ENCODE measurements at regions of chr2 and their contacts with region 1.

Region 1: GRCh38 chr2:70789304-70790135 is 923 bp downstream of the FIGLA start:
- DNase-seq: peak; percentile 36 to 79 (median 56)
- ATAC-seq: peak; percentile 73
- H3K4me3 ChIP-seq: peak overlapping the region; percentile 38
- H3K4me3 Mint-ChIP-seq: peak overlapping the region; percentile 81
- H3K27ac ChIP-seq: no peak overlapping the region
- H3K27ac Mint-ChIP-seq: no peak overlapping the region
- H3K4me1 ChIP-seq: peaks cover 11% of the 10 kb centered on the region
- H3K4me1 Mint-ChIP-seq: peaks cover 13% of the 10 kb centered on the region
- H3K27me3 ChIP-seq: peaks cover 31 to 53% of the 10 kb centered on the region in 2 experiments
- H3K27me3 Mint-ChIP-seq: peaks cover 71% of the 10 kb centered on the region
- CTCF ChIP-seq: peak; percentile 66

Region 2: GRCh38 chr2:70656421-70657010 is 133.0 kb before region 1 on chr2:
- CTCF ChIA-PET with region 1: interaction called, 5 read pairs
- POLR2A ChIA-PET with region 1: interaction called, 4 read pairs
- intact Hi-C with region 1: loop called (anchors 1 kb)
- DNase-seq: peak in 11 of 14 experiments; percentile 18 to 71 (median 44)
- ATAC-seq: peak; percentile 87
- H3K4me3 ChIP-seq: no peak overlapping the region
- H3K4me3 Mint-ChIP-seq: peak overlapping the region; percentile 9
- H3K27ac ChIP-seq: peak overlapping the region in 1 of 2 donors; percentile 34
- H3K27ac Mint-ChIP-seq: peak overlapping the region; percentile 82
- H3K4me1 ChIP-seq: peaks cover 24% of the 10 kb centered on the region
- H3K4me1 Mint-ChIP-seq: peaks cover 36% of the 10 kb centered on the region
- H3K27me3 ChIP-seq: peaks cover 4% of the 10 kb centered on the region in 2 experiments
- H3K27me3 Mint-ChIP-seq: peaks cover 8% of the 10 kb centered on the region
- CTCF ChIP-seq: no peak

Region 3: DNA sequence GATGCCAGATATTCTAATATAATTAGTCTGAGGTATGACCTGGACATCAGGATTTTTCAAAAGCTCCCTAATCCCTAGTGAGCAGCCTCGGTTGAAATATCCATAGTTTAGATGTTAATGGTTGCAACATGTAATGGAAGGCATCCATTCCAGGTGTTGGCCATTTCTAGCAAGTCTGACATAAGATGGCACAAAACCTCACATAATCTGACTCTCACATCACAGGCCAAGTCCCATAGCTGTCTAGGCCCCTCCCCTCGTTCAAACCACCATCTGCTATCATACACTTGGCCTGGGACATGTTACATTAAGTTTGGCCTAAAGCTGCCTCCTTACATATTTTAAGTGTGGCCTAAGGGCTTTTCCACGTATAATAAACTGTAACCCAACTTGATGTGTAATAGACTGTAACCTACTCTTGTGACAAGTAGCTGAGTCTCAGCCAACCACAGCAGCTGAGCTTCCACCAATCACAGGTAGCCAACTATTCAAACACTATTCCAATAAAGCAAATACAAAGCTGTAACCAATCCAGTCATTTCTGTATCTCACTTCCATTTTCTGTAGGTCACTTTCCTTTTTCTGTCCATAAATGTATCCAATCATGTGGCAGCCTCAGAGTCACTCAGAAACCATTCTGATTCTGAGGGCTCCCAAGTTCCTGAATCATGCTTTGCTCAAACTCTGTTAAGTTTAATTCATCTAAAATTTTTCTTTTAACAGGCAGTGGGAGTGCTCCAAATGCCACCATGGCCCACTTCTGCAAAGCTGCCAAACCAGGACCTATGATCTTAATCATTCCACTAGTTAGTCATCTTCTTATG is 80.9 kb before region 1 on chr2:
- CTCF ChIA-PET with region 1: no interaction called
- POLR2A ChIA-PET with region 1: no interaction called
- intact Hi-C with region 1: no loop called
- DNase-seq: no peak
- ATAC-seq: no peak
- H3K4me3 ChIP-seq: no peak overlapping the region
- H3K4me3 Mint-ChIP-seq: no peak overlapping the region
- H3K27ac ChIP-seq: no peak overlapping the region
- H3K27ac Mint-ChIP-seq: no peak overlapping the region
- H3K4me1 ChIP-seq: no peaks in the 10 kb centered on the region
- H3K4me1 Mint-ChIP-seq: no peaks in the 10 kb centered on the region
- H3K27me3 ChIP-seq: no peaks in the 10 kb centered on the region
- H3K27me3 Mint-ChIP-seq: no peaks in the 10 kb centered on the region
- CTCF ChIP-seq: no peak

Region 4: DNA sequence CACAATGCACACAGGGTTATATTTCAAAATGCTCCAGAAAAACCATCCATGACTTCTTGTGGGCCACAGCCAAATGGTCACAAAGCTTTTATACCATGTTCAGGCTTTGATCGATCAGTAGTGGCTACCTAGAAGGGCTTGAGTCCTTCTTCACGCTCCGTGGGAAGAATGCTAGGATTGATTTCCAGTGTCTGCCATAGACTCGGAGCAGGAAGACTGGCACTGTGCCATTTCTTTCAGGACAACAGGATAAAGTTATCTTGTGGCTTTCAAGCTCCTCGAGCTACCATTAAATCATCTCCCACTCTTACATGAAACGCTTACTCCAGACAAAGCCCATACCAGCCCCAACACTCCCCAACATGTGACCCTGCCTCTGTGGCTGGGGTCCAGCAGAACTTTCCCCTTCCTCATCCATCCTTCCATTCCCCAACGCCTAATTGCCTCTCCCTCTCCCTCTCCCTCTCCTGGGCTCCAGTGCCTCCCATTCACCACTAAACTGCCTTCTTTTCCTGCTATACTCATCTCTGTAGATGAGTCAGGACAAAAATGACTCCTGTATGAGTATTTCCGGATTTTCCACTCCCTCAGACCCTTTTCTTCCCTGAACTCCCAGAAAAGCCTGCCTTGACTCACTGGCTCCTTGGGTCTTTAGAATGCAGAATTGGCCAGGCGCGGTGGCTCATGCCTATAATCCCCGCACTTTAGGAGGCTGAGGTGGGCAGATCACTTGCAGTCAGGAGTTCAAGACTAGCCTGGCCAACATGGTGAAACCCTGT is 62.4 kb before region 1 on chr2:
- CTCF ChIA-PET with region 1: no interaction called
- POLR2A ChIA-PET with region 1: no interaction called
- intact Hi-C with region 1: no loop called
- DNase-seq: no peak
- ATAC-seq: no peak
- H3K4me3 ChIP-seq: no peak overlapping the region
- H3K4me3 Mint-ChIP-seq: no peak overlapping the region
- H3K27ac ChIP-seq: no peak overlapping the region
- H3K27ac Mint-ChIP-seq: no peak overlapping the region
- H3K4me1 ChIP-seq: no peaks in the 10 kb centered on the region
- H3K4me1 Mint-ChIP-seq: no peaks in the 10 kb centered on the region
- H3K27me3 ChIP-seq: no peaks in the 10 kb centered on the region
- H3K27me3 Mint-ChIP-seq: no peaks in the 10 kb centered on the region
- CTCF ChIP-seq: no peak

Region 5: GRCh38 chr2:70861777-70862625 is 72.5 kb after region 1 on chr2:
- CTCF ChIA-PET with region 1: no interaction called
- POLR2A ChIA-PET with region 1: no interaction called
- intact Hi-C with region 1: loop called in 1 of 2 experiments (anchors 5 kb)
- DNase-seq: peak; percentile 51 to 84 (median 60)
- ATAC-seq: peak; percentile 74
- H3K4me3 ChIP-seq: no peak overlapping the region
- H3K4me3 Mint-ChIP-seq: no peak overlapping the region
- H3K27ac ChIP-seq: no peak overlapping the region
- H3K27ac Mint-ChIP-seq: no peak overlapping the region
- H3K4me1 ChIP-seq: peaks cover 6% of the 10 kb centered on the region
- H3K4me1 Mint-ChIP-seq: peaks cover 5% of the 10 kb centered on the region
- H3K27me3 ChIP-seq: peaks cover 14 to 20% of the 10 kb centered on the region in 2 experiments
- H3K27me3 Mint-ChIP-seq: peaks cover 50% of the 10 kb centered on the region
- CTCF ChIP-seq: peak; percentile 89

Region 6: DNA sequence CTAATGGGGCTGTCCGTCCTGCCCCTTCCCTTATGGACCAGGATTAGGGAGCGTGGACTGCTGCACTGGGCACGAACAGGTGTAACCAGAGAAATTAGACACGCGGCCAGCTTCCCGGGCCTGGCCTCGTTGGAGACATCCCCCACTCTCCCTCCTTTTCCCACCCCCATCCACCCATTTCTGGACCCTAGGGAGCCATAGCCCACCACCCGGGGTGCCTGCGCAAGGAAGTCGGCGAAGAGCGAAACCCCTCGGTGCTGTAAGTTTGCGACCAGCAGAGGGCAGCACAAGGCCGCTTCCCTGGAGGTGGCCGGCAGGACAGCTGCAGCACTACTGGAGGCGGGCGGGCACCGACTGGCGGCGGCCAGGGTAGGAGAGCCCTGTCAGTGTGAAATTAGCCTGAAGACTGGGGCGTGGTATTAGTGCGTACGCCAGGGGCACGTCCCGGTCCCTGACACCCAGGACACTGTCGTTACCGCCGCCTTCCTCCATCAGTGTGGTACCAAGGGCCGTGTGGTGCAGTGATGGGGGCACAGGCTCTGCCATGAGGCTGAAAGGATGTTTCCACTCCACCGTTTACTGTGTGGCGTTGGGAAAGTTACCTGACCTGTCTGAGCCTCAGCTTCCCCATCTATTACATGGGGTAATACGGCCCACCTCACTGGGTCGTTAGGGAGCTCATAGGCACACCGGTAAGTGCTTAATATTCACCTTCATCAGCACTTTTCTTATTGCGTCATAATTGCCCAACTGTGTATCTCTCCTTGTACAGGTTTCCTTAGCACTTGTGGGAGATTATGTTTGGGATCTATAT is 82.1 kb after region 1 on chr2:
- CTCF ChIA-PET with region 1: interaction called, 5 read pairs
- POLR2A ChIA-PET with region 1: interaction called, 3 read pairs
- intact Hi-C with region 1: loop called in 1 of 2 experiments (anchors 5 kb)
- DNase-seq: peak; percentile 59 to 88 (median 74)
- ATAC-seq: peak; percentile 92
- H3K4me3 ChIP-seq: no peak overlapping the region
- H3K4me3 Mint-ChIP-seq: no peak overlapping the region
- H3K27ac ChIP-seq: no peak overlapping the region
- H3K27ac Mint-ChIP-seq: no peak overlapping the region
- H3K4me1 ChIP-seq: peaks cover 11% of the 10 kb centered on the region
- H3K4me1 Mint-ChIP-seq: peaks cover 5% of the 10 kb centered on the region
- H3K27me3 ChIP-seq: peaks cover 35 to 48% of the 10 kb centered on the region in 2 experiments
- H3K27me3 Mint-ChIP-seq: peaks cover 61% of the 10 kb centered on the region
- CTCF ChIP-seq: peak; percentile 83

Region 7: GRCh38 chr2:70919672-70920366 is 130.3 kb after region 1 on chr2:
- CTCF ChIA-PET with region 1: no interaction called
- POLR2A ChIA-PET with region 1: no interaction called
- intact Hi-C with region 1: loop called in 1 of 2 experiments (anchors 2 kb)
- DNase-seq: peak; percentile 34 to 81 (median 62)
- ATAC-seq: peak; percentile 61
- H3K4me3 ChIP-seq: no peak overlapping the region
- H3K4me3 Mint-ChIP-seq: no peak overlapping the region
- H3K27ac ChIP-seq: no peak overlapping the region
- H3K27ac Mint-ChIP-seq: no peak overlapping the region
- H3K4me1 ChIP-seq: peaks cover 3% of the 10 kb centered on the region
- H3K4me1 Mint-ChIP-seq: no peaks in the 10 kb centered on the region
- H3K27me3 ChIP-seq: peaks cover 2 to 9% of the 10 kb centered on the region in 2 experiments
- H3K27me3 Mint-ChIP-seq: peaks cover 43% of the 10 kb centered on the region
- CTCF ChIP-seq: peak; percentile 82

Region 8: DNA sequence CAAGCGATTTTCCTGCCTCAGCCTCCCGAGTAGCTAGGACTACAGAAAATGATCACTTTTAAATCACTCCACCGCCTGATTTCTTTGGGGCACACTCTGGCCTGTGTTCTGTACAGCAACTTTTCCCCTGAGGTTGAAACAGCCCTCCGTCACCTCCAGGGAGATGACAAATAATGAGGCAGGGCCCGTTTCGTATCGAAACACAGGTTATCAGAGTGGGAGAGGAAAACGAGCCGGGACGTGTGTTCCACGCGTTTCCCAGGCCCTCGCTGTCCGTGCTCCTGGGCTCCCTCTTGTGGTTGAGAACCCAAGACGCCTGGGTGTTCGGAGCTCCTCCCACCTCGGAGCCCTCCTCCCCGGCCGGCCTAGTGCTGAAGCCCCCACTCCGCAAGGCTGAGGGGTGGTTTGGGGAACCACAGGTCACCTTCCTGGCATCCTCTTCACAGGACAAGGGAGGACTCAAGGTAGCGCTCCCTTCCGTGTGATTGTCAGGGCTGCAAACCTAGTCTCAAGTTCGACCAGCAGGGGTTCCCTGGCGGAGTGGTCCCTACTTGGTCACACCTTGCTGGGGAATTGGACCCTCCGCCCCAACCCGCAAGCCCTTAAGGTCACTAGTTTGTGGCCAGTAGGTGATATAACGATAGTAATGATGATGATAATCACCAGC is 158.9 kb after region 1 on chr2:
- CTCF ChIA-PET with region 1: no interaction called
- POLR2A ChIA-PET with region 1: no interaction called
- intact Hi-C with region 1: loop called (anchors 1 to 2 kb)
- DNase-seq: peak; percentile 62 to 87 (median 70)
- ATAC-seq: peak; percentile 95
- H3K4me3 ChIP-seq: peak overlapping the region; percentile 3
- H3K4me3 Mint-ChIP-seq: peak overlapping the region; percentile 79
- H3K27ac ChIP-seq: no peak overlapping the region
- H3K27ac Mint-ChIP-seq: no peak overlapping the region
- H3K4me1 ChIP-seq: peaks cover 13% of the 10 kb centered on the region
- H3K4me1 Mint-ChIP-seq: peaks cover 12% of the 10 kb centered on the region
- H3K27me3 ChIP-seq: peaks cover 2 to 3% of the 10 kb centered on the region in 2 experiments
- H3K27me3 Mint-ChIP-seq: peaks cover 22% of the 10 kb centered on the region
- CTCF ChIP-seq: peak; percentile 95